OCI-LY7 (cell line): ENCODE measurements at regions of chrX and their contacts with region 1.

Region 1: GRCh38 chrX:51395810-51396728 is 63.4 kb downstream of the NUDT10 start:
- DNase-seq: peak; percentile 89
- H3K4me3 ChIP-seq: peak overlapping the region; percentile 79
- H3K27ac ChIP-seq: peak overlapping the region; percentile 98
- H3K4me1 ChIP-seq: peaks cover 29% of the 10 kb centered on the region
- CTCF ChIP-seq: peak; percentile 60

Region 2: GRCh38 chrX:51420610-51421009 is 24.5 kb after region 1 on chrX:
- CTCF ChIA-PET with region 1: no interaction called
- POLR2A ChIA-PET with region 1: no interaction called
- intact Hi-C with region 1: loop called (anchors 2 kb)
- DNase-seq: peak; percentile 73
- H3K4me3 ChIP-seq: no peak overlapping the region
- H3K27ac ChIP-seq: no peak overlapping the region
- H3K4me1 ChIP-seq: peaks cover 39% of the 10 kb centered on the region
- CTCF ChIP-seq: peak; percentile 81

Region 3: DNA sequence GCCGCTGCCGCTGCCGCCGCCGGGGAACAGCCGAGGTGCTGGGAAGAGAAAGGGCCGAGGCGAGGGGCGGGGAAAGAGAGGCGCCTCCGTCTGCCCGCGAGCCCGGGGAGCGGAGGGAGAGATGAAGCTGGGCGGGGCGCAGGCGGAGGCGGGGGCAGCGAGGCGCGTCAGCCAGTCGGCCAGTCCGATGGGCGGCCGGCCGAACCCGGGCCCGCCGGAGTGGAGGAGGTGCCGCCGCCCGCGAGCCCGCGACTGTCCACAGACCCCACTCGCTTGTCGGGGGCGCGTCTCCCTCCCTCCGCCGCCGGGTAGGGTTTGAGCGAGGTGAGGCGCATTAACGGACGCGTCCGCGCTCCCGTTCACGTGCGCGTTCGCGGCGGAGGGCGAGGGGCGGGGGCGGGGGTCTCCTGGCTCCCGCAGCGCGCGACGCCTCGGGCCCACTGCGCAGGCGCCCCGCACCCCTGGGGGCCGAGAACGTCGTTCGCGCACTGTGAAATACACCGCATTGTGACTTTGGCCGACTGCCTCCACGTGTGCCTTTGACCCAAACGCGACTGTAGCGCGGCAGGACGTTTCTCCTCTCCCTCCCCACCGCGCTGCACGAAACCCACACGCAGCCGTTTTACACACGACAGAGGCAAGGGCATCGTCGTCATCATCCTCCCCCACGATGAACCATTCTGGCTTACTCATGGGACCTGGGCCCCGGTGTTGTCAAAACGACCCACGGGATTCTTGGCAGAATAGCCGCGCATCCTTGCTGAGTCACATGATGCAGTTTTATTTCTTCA is 100.6 kb after region 1 on chrX and contains the start of gene NUDT11:
- CTCF ChIA-PET with region 1: no interaction called
- POLR2A ChIA-PET with region 1: no interaction called
- intact Hi-C with region 1: loop called (anchors 5 kb)
- DNase-seq: peak; percentile 70
- H3K4me3 ChIP-seq: peak within 1 kb of the TSS; percentile 76
- H3K27ac ChIP-seq: peak within 1 kb of the TSS; percentile 53
- H3K4me1 ChIP-seq: peaks cover 28% of the 10 kb centered on the region
- CTCF ChIP-seq: no peak
- total RNA-seq, gene NUDT11: 21.5 and 24.5 TPM in 2 replicates

Region 4: DNA sequence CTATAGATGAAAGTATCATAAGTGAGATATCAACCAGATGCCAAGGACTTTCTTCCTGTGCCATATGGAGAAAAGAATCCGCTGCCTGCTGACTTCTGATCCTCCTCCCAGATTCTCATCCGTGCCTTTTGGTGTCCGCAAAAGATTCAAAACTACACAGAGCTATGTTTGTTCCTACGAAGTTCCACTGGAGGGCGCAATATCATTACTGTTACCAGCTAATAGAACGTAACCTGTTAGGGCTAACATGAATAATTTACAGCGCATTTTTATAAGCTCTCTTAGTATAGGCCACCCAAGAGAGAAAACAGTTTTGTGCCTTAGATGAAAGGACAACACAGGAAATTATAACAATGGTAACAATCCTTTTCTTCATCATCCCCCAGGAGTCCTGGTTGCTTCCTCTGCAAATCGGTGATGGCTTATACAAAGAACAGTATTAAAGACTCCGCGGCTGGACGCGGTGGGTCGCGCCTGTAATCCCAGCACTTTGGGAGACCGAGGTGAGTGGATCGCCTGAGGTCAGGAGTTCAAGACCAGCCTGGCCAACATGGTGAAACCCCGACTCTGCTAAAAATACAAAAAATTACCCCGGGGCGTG is 245.5 kb after region 1 on chrX:
- CTCF ChIA-PET with region 1: no interaction called
- POLR2A ChIA-PET with region 1: no interaction called
- intact Hi-C with region 1: no loop called
- DNase-seq: peak; percentile 47
- H3K4me3 ChIP-seq: no peak overlapping the region
- H3K27ac ChIP-seq: no peak overlapping the region
- H3K4me1 ChIP-seq: no peaks in the 10 kb centered on the region
- CTCF ChIP-seq: peak; percentile 78